Activated CD4-positive, alpha-beta T cell treated with anti-CD3 and anti-CD28 coated beads, Interleukin-2, amount 10 ng/mL, durations not matched to agents 24 days and 14 days (primary cell): ENCODE measurements at regions of chr10 and their contacts with region 1.

Region 1: GRCh38 chr10:13160934-13161856 is at the start of gene MCM10:
- DNase-seq: peak; percentile 100
- H3K4me3 Mint-ChIP-seq: peak within 1 kb of the TSS; percentile 98
- H3K27ac Mint-ChIP-seq: peak within 1 kb of the TSS; percentile 89
- H3K4me1 Mint-ChIP-seq: peaks cover 25% of the 10 kb centered on the region
- H3K27me3 Mint-ChIP-seq: no peaks in the 10 kb centered on the region
- total RNA-seq, gene MCM10: 107 and 112 TPM in 2 replicates

Region 2: GRCh38 chr10:12042797-12043651 is 1118.2 kb before region 1 on chr10 and contains the start of gene UPF2:
- intact Hi-C with region 1: loop called (anchors 2 kb)
- DNase-seq: peak; percentile 98
- H3K4me3 Mint-ChIP-seq: peak within 1 kb of the TSS; percentile 95
- H3K27ac Mint-ChIP-seq: peak within 1 kb of the TSS; percentile 100
- H3K4me1 Mint-ChIP-seq: peaks cover 32% of the 10 kb centered on the region
- H3K27me3 Mint-ChIP-seq: peaks cover 4% of the 10 kb centered on the region
- total RNA-seq, gene UPF2: 38.9 and 41.4 TPM in 2 replicates

Region 3: GRCh38 chr10:13121500-13121854 is 39.7 kb before region 1 on chr10:
- intact Hi-C with region 1: no loop called
- DNase-seq: no peak
- H3K4me3 Mint-ChIP-seq: no peak overlapping the region
- H3K27ac Mint-ChIP-seq: no peak overlapping the region
- H3K4me1 Mint-ChIP-seq: peaks cover 9% of the 10 kb centered on the region
- H3K27me3 Mint-ChIP-seq: no peaks in the 10 kb centered on the region

Region 4: GRCh38 chr10:13183625-13184024 is 22.4 kb after region 1 on chr10:
- intact Hi-C with region 1: loop called (anchors 1 kb)
- DNase-seq: no peak
- H3K4me3 Mint-ChIP-seq: no peak overlapping the region
- H3K27ac Mint-ChIP-seq: no peak overlapping the region
- H3K4me1 Mint-ChIP-seq: no peaks in the 10 kb centered on the region
- H3K27me3 Mint-ChIP-seq: no peaks in the 10 kb centered on the region

Region 5: GRCh38 chr10:13348216-13349017 is 187.2 kb after region 1 on chr10 and contains the start of gene SEPHS1:
- intact Hi-C with region 1: loop called (anchors 1 kb)
- DNase-seq: peak; percentile 94
- H3K4me3 Mint-ChIP-seq: peak within 1 kb of the TSS; percentile 87
- H3K27ac Mint-ChIP-seq: peak within 1 kb of the TSS; percentile 95
- H3K4me1 Mint-ChIP-seq: peaks cover 49% of the 10 kb centered on the region
- H3K27me3 Mint-ChIP-seq: no peaks in the 10 kb centered on the region
- total RNA-seq, gene SEPHS1: 59.9 and 64.2 TPM in 2 replicates

Region 6: GRCh38 chr10:13586676-13587355 is 425.6 kb after region 1 on chr10 and contains the start of gene PRPF18:
- intact Hi-C with region 1: loop called (anchors 1 kb)
- DNase-seq: peak; percentile 98
- H3K4me3 Mint-ChIP-seq: peak within 1 kb of the TSS; percentile 96
- H3K27ac Mint-ChIP-seq: peak within 1 kb of the TSS; percentile 98
- H3K4me1 Mint-ChIP-seq: peaks cover 18% of the 10 kb centered on the region
- H3K27me3 Mint-ChIP-seq: peaks cover 13% of the 10 kb centered on the region
- total RNA-seq, gene PRPF18: 21.5 and 23.4 TPM in 2 replicates